ENCODE measurements at regions of chr6 and their contacts with region 1.

Region 1: DNA sequence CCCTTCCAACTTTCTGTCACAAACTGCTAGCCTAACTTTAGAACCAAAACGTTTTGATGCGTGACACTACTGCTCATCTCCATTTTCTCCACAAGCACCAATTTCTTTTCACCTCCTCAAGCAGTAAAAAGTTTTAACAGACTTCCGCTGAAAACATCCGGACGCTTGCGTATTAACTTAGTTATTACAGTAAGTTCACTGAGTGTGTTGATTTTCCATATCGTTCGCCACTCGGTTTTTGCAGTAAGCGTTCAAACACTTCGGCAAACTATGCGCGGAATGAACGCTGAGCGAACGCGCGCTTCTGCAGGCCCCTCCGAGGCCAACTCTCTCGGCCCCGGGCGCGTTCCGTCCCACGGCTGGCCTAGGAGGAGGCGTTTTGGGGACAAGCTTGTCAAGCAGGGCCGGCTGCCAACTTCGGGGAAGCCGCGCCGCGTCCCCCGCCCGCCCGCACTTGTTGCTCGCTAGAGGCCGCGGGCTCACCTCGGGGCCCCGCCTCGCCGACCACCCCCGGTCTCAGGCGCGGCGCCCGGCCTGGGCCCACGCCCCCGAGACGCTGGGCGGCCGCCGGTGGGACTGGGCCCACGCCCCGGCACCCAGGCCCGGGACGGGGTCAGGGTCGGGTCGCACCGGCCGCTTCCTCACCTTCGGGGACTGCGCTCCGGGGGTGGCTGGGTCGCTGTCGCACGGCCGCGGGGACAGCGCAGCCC is 945 bp downstream of the PHF10 start:
- DNase-seq: peak; percentile 79
- ATAC-seq: peak; percentile 44
- H3K4me3 Mint-ChIP-seq: peak overlapping the region; percentile 94
- H3K27ac Mint-ChIP-seq: peak overlapping the region; percentile 95
- H3K4me1 Mint-ChIP-seq: peaks cover 36% of the 10 kb centered on the region
- H3K27me3 Mint-ChIP-seq: peaks cover 4% of the 10 kb centered on the region

Region 2: GRCh38 chr6:169701954-169702839 is 21.2 kb before region 1 on chr6 and contains the starts of genes C6orf120 and WDR27:
- POLR2A ChIA-PET with region 1: interaction called, 20 read pairs
- DNase-seq: peak; percentile 95
- ATAC-seq: peak; percentile 91
- H3K4me3 Mint-ChIP-seq: peak within 1 kb of the TSS; percentile 88
- H3K27ac Mint-ChIP-seq: peak within 1 kb of the TSS; percentile 86
- H3K4me1 Mint-ChIP-seq: peaks cover 39% of the 10 kb centered on the region
- H3K27me3 Mint-ChIP-seq: no peaks in the 10 kb centered on the region
- total RNA-seq, gene C6orf120: 22.2 to 22.5 TPM
- total RNA-seq, gene WDR27: 37.6 to 39.6 TPM